ENCODE measurements at regions of chr17 and their contacts with region 1.

Region 1: GRCh38 chr17:48181653-48182052 is 74.1 kb downstream of the SNX11 start:
- DNase-seq: no peak
- H3K4me3 ChIP-seq: no peak overlapping the region
- H3K27ac ChIP-seq: no peak overlapping the region
- H3K4me1 ChIP-seq: peaks cover 0 to 9% (median 3%) of the 10 kb centered on the region in 4 experiments; a peak in 3 of 7 replicates
- H3K27me3 ChIP-seq: no peaks in the 10 kb centered on the region
- CTCF ChIP-seq: peak; percentile 37 to 81 (median 76)
- EP300 ChIP-seq: no peak
- POLR2A ChIP-seq: no peak
- RAD21 ChIP-seq: peak; percentile 84 to 85

Region 2: DNA sequence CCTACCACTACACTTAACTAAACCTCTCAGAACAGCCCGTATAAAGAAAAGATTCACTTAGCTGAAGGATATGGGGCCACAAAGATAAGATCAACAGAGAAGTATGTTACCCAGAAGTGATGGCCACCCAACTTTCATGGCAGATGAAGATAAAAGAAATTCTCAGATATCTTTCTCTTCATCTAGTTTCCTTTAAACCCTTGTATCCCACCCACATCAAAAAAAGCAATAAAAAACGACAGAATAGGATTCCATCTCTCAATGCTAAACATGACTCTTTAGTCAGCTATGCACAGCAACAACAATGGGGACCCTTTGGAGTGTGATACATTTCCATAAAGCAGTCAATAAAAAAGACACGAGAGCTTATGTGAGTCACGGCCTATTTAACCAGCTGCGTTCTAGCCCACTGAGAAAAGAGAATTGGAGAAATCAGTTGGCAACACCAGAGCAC is 12.5 kb after region 1 on chr17:
- CTCF ChIA-PET with region 1: interaction called, 15 read pairs
- POLR2A ChIA-PET with region 1: interaction called, 3 read pairs
- DNase-seq: no peak
- H3K4me3 ChIP-seq: no peak overlapping the region
- H3K27ac ChIP-seq: no peak overlapping the region
- H3K4me1 ChIP-seq: peaks cover 0 to 12% (median 7%) of the 10 kb centered on the region in 4 experiments; a peak in 3 of 7 replicates
- H3K27me3 ChIP-seq: peaks cover 0 to 2% (median 0%) of the 10 kb centered on the region in 4 experiments; a peak in 1 of 7 replicates
- CTCF ChIP-seq: no peak
- EP300 ChIP-seq: no peak
- POLR2A ChIP-seq: no peak
- RAD21 ChIP-seq: no peak

Region 3: DNA sequence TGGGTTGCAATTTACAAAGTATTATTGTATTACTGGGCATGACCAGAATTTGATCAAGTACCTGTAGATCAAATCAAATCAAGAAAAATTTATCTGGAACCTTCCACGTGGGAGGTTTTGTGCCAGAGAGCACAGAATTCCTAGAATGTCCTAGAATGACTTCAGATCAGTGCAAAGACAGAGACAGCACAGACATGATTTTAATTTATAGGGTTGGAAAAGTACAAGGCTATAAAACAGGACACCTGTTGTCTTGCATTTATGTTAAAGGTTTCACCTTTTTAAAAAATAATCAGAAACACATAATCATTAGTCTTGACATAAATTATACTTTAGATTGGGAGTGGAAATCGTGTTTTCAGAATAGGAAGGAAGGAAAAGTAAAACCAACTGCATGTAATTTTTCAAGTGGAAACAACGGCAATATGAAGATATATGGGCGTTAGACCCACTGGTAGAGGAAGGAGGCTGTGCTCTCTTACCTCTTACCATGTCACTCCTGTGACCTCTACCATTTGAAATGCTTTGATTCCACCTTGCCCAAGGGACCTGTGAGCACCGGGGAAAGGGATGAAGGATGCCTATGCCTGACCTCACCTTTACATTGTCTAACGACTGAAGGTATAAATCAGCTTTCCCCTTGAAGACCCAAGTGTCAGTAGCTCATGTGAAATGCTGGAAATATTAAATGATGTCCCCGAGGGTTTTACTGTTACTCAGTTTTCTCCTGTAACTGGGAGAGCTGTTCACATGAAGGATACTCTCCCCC is 26.3 kb after region 1 on chr17:
- CTCF ChIA-PET with region 1: interaction called, 28 read pairs
- POLR2A ChIA-PET with region 1: no interaction called
- DNase-seq: no peak
- H3K4me3 ChIP-seq: no peak overlapping the region
- H3K27ac ChIP-seq: no peak overlapping the region
- H3K4me1 ChIP-seq: no peaks in the 10 kb centered on the region
- H3K27me3 ChIP-seq: no peaks in the 10 kb centered on the region
- CTCF ChIP-seq: no peak
- EP300 ChIP-seq: no peak
- POLR2A ChIP-seq: no peak
- RAD21 ChIP-seq: no peak